Stomach (tissue), 19 donors: ENCODE measurements at regions of chr14 and their contacts with region 1.

Region 1: DNA sequence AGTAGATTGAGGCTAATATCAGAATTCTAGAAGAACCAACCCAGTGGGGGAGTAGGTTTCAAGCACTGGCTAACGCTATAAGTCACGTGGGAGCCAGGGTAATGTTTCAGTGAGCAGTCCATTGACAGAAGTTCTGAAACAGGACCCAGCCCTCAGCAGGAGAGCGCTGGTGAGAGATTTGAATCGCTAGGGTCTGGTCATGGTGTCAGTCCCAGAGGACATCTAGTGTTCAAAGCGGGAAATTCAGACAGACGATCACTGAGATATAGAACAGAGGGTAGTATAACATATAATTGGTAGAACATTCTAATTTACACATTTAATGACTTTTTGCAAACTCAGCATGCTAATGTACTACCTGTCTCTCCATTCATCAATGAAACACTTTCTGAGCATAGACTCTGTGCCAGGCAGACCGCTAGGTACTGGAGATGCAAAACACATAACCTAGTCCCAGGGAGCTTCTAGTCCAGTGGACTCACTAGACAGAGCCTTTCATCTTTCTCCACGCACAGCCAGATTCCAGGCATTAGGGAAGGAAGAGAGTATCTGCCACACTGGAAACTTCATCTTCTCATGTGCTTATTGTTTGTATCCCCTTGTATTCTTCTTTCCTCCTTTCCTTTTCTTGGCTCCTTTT is 35.4 kb upstream of the RNASE3 start:
- DNase-seq: peak; percentile 61 to 88
- H3K4me3 ChIP-seq: no peak overlapping the region
- H3K27ac ChIP-seq: no peak overlapping the region
- H3K4me1 ChIP-seq: peaks cover 0 to 14% (median 5%) of the 10 kb centered on the region in 4 donors
- H3K27me3 ChIP-seq: peaks cover 0 to 17% (median 4%) of the 10 kb centered on the region in 3 donors
- CTCF ChIP-seq: peak in 5 of 7 experiments; percentile 44 to 88 (median 72)
- EP300 ChIP-seq: no peak
- POLR2A ChIP-seq: no peak

Region 2: DNA sequence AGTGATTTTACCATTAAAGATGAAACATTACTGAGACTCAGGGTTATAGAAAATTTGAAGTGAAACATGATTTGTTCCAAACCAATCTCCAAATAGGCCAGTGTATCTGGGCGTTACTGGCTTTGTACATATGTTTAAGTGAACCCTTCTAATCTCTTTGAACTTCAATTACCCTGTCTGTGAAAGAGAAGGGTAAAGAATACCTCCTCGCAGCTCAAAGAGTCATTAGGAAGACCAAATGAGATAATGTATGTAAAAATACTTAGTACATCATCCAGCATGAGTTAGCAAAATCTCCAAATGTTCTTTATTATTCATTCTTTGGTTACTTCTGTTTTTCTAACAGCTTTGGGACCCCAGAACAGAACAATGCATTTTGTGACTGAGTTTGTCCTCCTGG is 632.4 kb before region 1 on chr14 and contains the start of gene OR11H6:
- intact Hi-C with region 1: no loop called
- DNase-seq: no peak
- H3K4me3 ChIP-seq: no peak within 1 kb of the TSS
- H3K27ac ChIP-seq: no peak within 1 kb of the TSS
- H3K4me1 ChIP-seq: no peaks in the 10 kb centered on the region
- H3K27me3 ChIP-seq: no peaks in the 10 kb centered on the region
- CTCF ChIP-seq: no peak
- EP300 ChIP-seq: no peak
- POLR2A ChIP-seq: no peak
- total RNA-seq, gene OR11H6: not detected

Region 3: GRCh38 chr14:20559461-20559904 is 296.3 kb before region 1 on chr14:
- intact Hi-C with region 1: no loop called
- DNase-seq: no peak
- H3K4me3 ChIP-seq: no peak overlapping the region
- H3K27ac ChIP-seq: no peak overlapping the region
- H3K4me1 ChIP-seq: no peaks in the 10 kb centered on the region
- H3K27me3 ChIP-seq: no peaks in the 10 kb centered on the region
- CTCF ChIP-seq: no peak
- EP300 ChIP-seq: no peak
- POLR2A ChIP-seq: no peak

Region 4: GRCh38 chr14:20690848-20691523 is 164.8 kb before region 1 on chr14:
- intact Hi-C with region 1: loop called (anchors 10 kb)
- DNase-seq: peak; percentile 45 to 91
- H3K4me3 ChIP-seq: no peak overlapping the region
- H3K27ac ChIP-seq: peak overlapping the region in 4 of 5 donors; percentile 9 to 37 (median 27)
- H3K4me1 ChIP-seq: peaks cover 24 to 54% (median 44%) of the 10 kb centered on the region in 4 donors
- H3K27me3 ChIP-seq: no peaks in the 10 kb centered on the region
- CTCF ChIP-seq: peak in 5 of 7 experiments; percentile 79 to 92 (median 85)
- EP300 ChIP-seq: no peak
- POLR2A ChIP-seq: no peak

Region 5: GRCh38 chr14:20969341-20969740 is 113.6 kb after region 1 on chr14:
- intact Hi-C with region 1: loop called (anchors 10 kb)
- DNase-seq: no peak
- H3K4me3 ChIP-seq: no peak overlapping the region
- H3K27ac ChIP-seq: no peak overlapping the region
- H3K4me1 ChIP-seq: peaks cover 0 to 16% (median 13%) of the 10 kb centered on the region in 4 donors
- H3K27me3 ChIP-seq: peaks cover 0 to 18% (median 0%) of the 10 kb centered on the region in 3 donors
- CTCF ChIP-seq: no peak
- EP300 ChIP-seq: no peak
- POLR2A ChIP-seq: no peak